Psoas muscle (tissue), 8 donors: ENCODE measurements at regions of chr19 and their contacts with region 1.

Region 1: GRCh38 chr19:2944775-2945574 is at the start of gene ZNF77:
- DNase-seq: peak; percentile 99
- ATAC-seq: peak; percentile 98 to 99 (median 99)
- H3K4me3 ChIP-seq: peak within 1 kb of the TSS; percentile 80
- H3K27ac ChIP-seq: peak within 1 kb of the TSS; percentile 93
- H3K4me1 ChIP-seq: peaks cover 15% of the 10 kb centered on the region
- H3K27me3 ChIP-seq: no peaks in the 10 kb centered on the region
- CTCF ChIP-seq: peak; percentile 11
- total RNA-seq, gene ZNF77: 1.3 to 2.4 (median 1.3) TPM

Region 2: DNA sequence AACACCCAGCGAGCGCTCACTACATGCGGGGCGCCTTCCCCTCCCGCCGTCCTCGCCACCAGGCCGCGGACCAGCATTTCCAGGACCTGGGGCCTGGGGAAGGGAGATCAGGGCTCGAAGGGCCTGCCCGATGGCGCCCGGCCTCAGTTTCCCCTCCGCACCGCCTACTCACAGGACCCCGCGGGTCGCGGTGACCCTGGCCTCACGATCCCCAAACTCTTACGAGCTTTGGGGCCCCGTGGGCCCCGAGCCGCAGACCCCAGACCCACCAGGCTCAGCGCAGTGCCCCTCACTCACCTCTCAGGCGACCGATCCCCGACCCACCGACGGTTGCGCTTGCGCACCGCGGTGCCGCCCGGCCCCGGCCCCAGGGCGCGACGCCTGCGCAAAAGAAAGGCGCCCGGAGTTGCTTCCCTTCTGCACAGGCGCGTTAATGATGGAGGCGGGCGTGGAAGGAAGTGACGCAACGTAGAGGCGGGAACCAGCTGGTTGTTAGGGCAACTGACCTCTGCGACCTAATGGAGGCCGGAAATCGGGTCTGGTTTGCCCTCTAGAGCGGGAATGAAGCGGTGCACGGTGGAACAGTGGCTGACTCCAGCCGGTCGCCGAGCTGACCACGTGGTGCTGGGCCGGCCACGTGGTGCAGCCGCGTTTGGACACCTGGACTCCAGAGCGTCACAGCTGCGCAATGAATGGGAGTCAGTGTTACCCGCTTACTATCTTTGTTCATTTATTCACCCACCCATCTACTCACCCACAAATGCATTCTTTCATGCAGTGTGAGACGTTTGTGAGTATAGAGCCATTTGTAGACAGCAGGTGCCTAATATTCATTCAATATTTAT is 161.8 kb before region 1 on chr19 and contains the start of gene SGTA:
- intact Hi-C with region 1: loop called in 1 of 2 experiments (anchors 1 kb)
- DNase-seq: peak; percentile 98 to 99
- ATAC-seq: peak; percentile 91 to 92 (median 91)
- H3K4me3 ChIP-seq: peak within 1 kb of the TSS; percentile 93
- H3K27ac ChIP-seq: peak within 1 kb of the TSS; percentile 97
- H3K4me1 ChIP-seq: peaks cover 55% of the 10 kb centered on the region
- H3K27me3 ChIP-seq: no peaks in the 10 kb centered on the region
- CTCF ChIP-seq: peak; percentile 44
- total RNA-seq, gene SGTA: 63.4 to 104 (median 77.8) TPM

Region 3: DNA sequence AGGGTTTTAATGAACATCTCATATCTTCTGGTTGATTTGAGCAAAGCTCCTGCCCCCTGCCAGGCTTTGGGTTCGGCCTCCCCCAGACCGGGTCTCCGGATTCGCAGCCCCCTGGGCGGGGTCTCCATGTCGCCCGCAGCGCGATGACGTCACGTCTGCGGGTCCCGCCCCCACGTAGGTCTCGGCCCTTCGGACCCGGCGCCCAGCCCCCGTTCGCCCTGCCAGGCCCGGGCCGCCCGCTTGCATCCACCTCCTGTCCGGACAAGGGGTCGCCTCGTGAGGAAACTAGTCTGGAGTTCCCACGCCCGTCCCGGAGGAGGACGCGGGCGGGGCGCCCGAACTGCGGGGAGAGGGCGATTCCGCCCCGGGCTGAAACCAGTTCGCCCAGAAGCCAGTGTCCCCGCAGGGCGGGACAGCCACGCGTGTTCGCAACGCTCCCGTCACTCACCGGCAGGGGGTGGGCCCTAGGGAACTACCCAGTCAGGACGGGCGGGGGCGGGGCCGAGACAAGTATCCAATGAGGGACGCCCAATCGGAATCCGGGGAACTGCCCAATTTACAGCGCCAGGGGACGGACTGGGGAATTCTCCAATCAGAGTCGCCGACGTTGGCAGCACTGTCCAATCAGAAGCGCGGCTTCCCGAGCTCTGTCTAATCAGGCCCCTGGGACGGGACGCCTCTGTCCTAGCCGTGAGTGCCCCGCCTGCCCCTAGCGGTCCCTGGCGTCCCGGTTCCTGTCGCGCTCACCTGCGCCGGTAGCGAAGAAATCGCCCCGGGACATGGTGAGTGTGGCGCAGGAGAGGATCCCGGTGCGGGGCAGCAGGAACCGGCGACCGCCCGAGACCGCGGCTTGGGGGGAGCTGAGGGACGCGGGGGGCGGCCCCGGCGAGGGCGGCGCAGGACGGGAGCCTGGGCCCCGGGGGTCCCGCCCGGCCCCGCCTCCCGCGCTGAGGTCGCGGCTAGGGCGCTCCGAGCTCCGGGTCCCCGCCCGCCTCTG is 103.9 kb before region 1 on chr19 and contains the start of gene ZNF555:
- intact Hi-C with region 1: loop called (anchors 5 to 10 kb)
- DNase-seq: peak; percentile 100
- ATAC-seq: peak; percentile 96 to 98 (median 98)
- H3K4me3 ChIP-seq: peak within 1 kb of the TSS; percentile 96
- H3K27ac ChIP-seq: peak within 1 kb of the TSS; percentile 93
- H3K4me1 ChIP-seq: peaks cover 15% of the 10 kb centered on the region
- H3K27me3 ChIP-seq: peaks cover 0 to 1% (median 0%) of the 10 kb centered on the region in 3 donors
- CTCF ChIP-seq: peak; percentile 51
- total RNA-seq, gene ZNF555: 2.9 to 16.0 (median 8.5) TPM

Region 4: GRCh38 chr19:2900296-2901252 is 44.4 kb before region 1 on chr19 and contains the start of gene ZNF57:
- intact Hi-C with region 1: loop called in 1 of 2 experiments (anchors 5 kb)
- DNase-seq: peak; percentile 100
- ATAC-seq: peak; percentile 99 to 100 (median 100)
- H3K4me3 ChIP-seq: peak within 1 kb of the TSS; percentile 87
- H3K27ac ChIP-seq: peak within 1 kb of the TSS; percentile 79
- H3K4me1 ChIP-seq: no peaks in the 10 kb centered on the region
- H3K27me3 ChIP-seq: no peaks in the 10 kb centered on the region
- CTCF ChIP-seq: no peak
- total RNA-seq, gene ZNF57: 1.0 to 1.7 (median 1.3) TPM